ENCODE measurements at regions of chr9 and their contacts with region 1.

Region 1: GRCh38 chr9:129177791-129178559 is at the start of gene IER5L:
- DNase-seq: peak; percentile 90
- ATAC-seq: peak; percentile 77
- H3K4me3 ChIP-seq: peak within 1 kb of the TSS; percentile 83 to 94 (median 93)
- H3K27ac ChIP-seq: peak within 1 kb of the TSS; percentile 82
- H3K4me1 ChIP-seq: peaks cover 62% of the 10 kb centered on the region
- H3K27me3 ChIP-seq: peaks cover 6 to 36% of the 10 kb centered on the region in 2 experiments
- CTCF ChIP-seq: 0 out of 2 replicates have a peak, but pooled peaks have one; percentile 10
- EP300 ChIP-seq: 0 out of 4 replicates have a peak, but pooled peaks of 1 of the 2 experiments have one; percentile 3
- POLR2A ChIP-seq: peak in 1 of 2 experiments; percentile 98; a peak in 2 of 4 replicates
- RAD21 ChIP-seq: no peak
- total RNA-seq, gene IER5L: 2.5 and 3.3 TPM in 2 replicates

Region 2: GRCh38 chr9:128723866-128724743 is 453.9 kb before region 1 on chr9 and contains the start of gene ZDHHC12:
- CTCF ChIA-PET with region 1: no interaction called
- POLR2A ChIA-PET with region 1: no interaction called
- in situ Hi-C with region 1: no loop called
- intact Hi-C with region 1: no loop called
- DNase-seq: peak; percentile 97
- ATAC-seq: peak; percentile 95
- H3K4me3 ChIP-seq: peak within 1 kb of the TSS; percentile 70 to 88 (median 74)
- H3K27ac ChIP-seq: peak within 1 kb of the TSS; percentile 34
- H3K4me1 ChIP-seq: peaks cover 38% of the 10 kb centered on the region
- H3K27me3 ChIP-seq: no peaks in the 10 kb centered on the region
- CTCF ChIP-seq: no peak
- EP300 ChIP-seq: peak in 1 of 2 experiments; percentile 21; a peak in 1 of 4 replicates
- POLR2A ChIP-seq: peak; percentile 78 to 95
- RAD21 ChIP-seq: 0 out of 2 replicates have a peak, but pooled peaks have one; percentile 32
- total RNA-seq, gene ZDHHC12: 18.3 and 28.0 TPM in 2 replicates

Region 3: DNA sequence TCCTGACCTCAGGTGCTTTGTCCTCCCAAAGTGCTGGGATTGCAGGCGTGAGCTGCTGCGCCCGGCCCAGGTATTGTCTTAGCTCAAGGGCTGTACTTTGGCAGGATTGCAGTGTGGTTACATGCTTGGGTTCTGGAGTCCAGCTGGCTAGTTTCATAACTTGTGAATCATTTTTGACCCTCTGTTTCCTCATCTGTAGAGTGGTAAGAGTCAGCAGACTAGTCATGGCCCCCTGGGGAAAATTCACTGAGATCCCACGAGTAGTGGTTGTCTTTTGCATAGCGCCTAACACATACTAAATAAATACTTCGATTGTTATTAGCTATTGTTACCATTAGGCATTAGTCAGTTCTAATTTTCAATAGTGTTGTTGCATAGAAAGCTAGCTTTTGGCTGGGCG is 52.5 kb before region 1 on chr9:
- CTCF ChIA-PET with region 1: no interaction called
- POLR2A ChIA-PET with region 1: no interaction called
- in situ Hi-C with region 1: no loop called
- intact Hi-C with region 1: no loop called
- DNase-seq: no peak
- ATAC-seq: no peak; the same call in 2 of the 3 replicates
- H3K4me3 ChIP-seq: no peak overlapping the region
- H3K27ac ChIP-seq: no peak overlapping the region
- H3K4me1 ChIP-seq: peaks cover 19% of the 10 kb centered on the region
- H3K27me3 ChIP-seq: no peaks in the 10 kb centered on the region
- CTCF ChIP-seq: no peak
- EP300 ChIP-seq: no peak
- POLR2A ChIP-seq: no peak
- RAD21 ChIP-seq: no peak

Region 4: GRCh38 chr9:129139993-129140396 is 38.0 kb before region 1 on chr9:
- CTCF ChIA-PET with region 1: interaction called, 3 read pairs
- POLR2A ChIA-PET with region 1: interaction called, 55 read pairs
- in situ Hi-C with region 1: loop called (anchors 5 kb)
- intact Hi-C with region 1: loop called (anchors 5 kb)
- DNase-seq: peak; percentile 94
- ATAC-seq: peak; percentile 81
- H3K4me3 ChIP-seq: peak overlapping the region; percentile 57 to 75 (median 67)
- H3K27ac ChIP-seq: peak overlapping the region; percentile 98
- H3K4me1 ChIP-seq: peaks cover 51% of the 10 kb centered on the region
- H3K27me3 ChIP-seq: no peaks in the 10 kb centered on the region
- CTCF ChIP-seq: no peak
- EP300 ChIP-seq: peak in 1 of 2 experiments; percentile 63; a peak in 2 of 4 replicates
- POLR2A ChIP-seq: peak; percentile 75 to 78
- RAD21 ChIP-seq: no peak

Region 5: GRCh38 chr9:129333953-129334724 is 156.2 kb after region 1 on chr9:
- CTCF ChIA-PET with region 1: no interaction called
- POLR2A ChIA-PET with region 1: interaction called, 13 read pairs
- in situ Hi-C with region 1: no loop called
- intact Hi-C with region 1: no loop called
- DNase-seq: peak; percentile 94
- ATAC-seq: peak; percentile 93
- H3K4me3 ChIP-seq: peak overlapping the region in 2 of 3 experiments; percentile 30 to 65; a peak in 4 of 6 replicates
- H3K27ac ChIP-seq: peak overlapping the region; percentile 93
- H3K4me1 ChIP-seq: peaks cover 56% of the 10 kb centered on the region
- H3K27me3 ChIP-seq: no peaks in the 10 kb centered on the region
- CTCF ChIP-seq: peak; percentile 47; the same call in 1 of the 2 replicates
- EP300 ChIP-seq: peak in 1 of 2 experiments; percentile 84; a peak in 2 of 4 replicates
- POLR2A ChIP-seq: no peak
- RAD21 ChIP-seq: peak; percentile 75

Region 6: GRCh38 chr9:129460323-129461261 is 282.6 kb after region 1 on chr9:
- CTCF ChIA-PET with region 1: no interaction called
- POLR2A ChIA-PET with region 1: interaction called, 13 read pairs
- in situ Hi-C with region 1: no loop called
- intact Hi-C with region 1: no loop called
- DNase-seq: peak; percentile 94
- ATAC-seq: peak; percentile 82
- H3K4me3 ChIP-seq: peak overlapping the region; percentile 49 to 78 (median 57)
- H3K27ac ChIP-seq: peak overlapping the region; percentile 73
- H3K4me1 ChIP-seq: peaks cover 47% of the 10 kb centered on the region
- H3K27me3 ChIP-seq: peaks cover 4 to 10% of the 10 kb centered on the region in 2 experiments; a peak in 3 of 5 replicates
- CTCF ChIP-seq: peak; percentile 18; the same call in 1 of the 2 replicates
- EP300 ChIP-seq: peak in 1 of 2 experiments; percentile 78; a peak in 3 of 4 replicates
- POLR2A ChIP-seq: peak; percentile 58 to 60; a peak in 3 of 4 replicates
- RAD21 ChIP-seq: peak; percentile 78

Region 7: DNA sequence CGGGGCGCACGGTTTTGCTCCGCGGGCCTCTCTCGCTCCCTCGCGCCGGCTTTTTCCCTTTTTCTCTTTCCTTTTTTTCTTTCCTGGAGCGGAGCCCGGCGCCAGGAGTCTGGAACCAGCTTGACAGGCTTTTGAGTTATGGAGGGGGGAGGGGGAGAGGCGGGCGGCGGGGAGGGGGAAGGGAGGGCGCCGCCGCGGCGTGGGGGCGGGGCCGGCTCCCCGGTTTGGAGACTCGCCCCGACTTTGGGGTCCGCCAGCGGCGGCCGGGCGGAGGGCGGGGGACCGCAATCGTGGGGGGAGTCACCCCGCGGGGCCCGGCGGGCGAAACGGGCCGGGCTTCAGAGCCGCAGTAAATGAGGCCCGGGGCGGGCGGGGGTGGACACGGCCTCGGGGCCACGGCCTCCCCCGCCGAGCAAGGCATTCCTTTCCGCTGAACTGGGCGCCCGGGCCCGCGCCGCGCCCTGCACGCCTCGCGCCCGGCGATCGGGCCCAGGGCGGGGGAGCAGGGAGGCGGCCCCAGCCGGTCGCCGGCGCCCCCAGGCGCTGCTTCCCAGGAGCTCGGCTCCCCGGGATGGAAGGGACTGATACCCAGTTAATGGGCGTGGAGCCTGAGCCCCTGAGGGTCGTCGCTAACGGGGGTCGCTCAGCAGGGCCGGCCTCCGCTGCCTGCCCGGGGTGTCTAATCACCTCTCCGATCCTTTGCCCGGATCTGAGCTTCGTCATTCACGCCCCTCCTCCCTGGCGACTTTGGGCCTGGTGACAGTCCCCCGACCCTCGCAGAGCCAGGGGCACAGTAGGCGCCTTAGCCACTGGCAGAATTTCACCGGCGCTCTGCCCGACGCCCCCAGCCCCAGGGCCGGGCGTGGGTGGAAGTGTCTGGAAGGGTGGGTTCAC is 304.8 kb after region 1 on chr9:
- CTCF ChIA-PET with region 1: no interaction called
- POLR2A ChIA-PET with region 1: interaction called, 4 read pairs
- in situ Hi-C with region 1: loop called (anchors 10 kb)
- intact Hi-C with region 1: loop called (anchors 10 kb)
- DNase-seq: no peak
- ATAC-seq: no peak
- H3K4me3 ChIP-seq: no peak overlapping the region; a peak in 1 of 6 replicates
- H3K27ac ChIP-seq: no peak overlapping the region
- H3K4me1 ChIP-seq: peaks cover 82% of the 10 kb centered on the region
- H3K27me3 ChIP-seq: no peaks in the 10 kb centered on the region
- CTCF ChIP-seq: no peak
- EP300 ChIP-seq: no peak
- POLR2A ChIP-seq: no peak
- RAD21 ChIP-seq: no peak

Region 8: DNA sequence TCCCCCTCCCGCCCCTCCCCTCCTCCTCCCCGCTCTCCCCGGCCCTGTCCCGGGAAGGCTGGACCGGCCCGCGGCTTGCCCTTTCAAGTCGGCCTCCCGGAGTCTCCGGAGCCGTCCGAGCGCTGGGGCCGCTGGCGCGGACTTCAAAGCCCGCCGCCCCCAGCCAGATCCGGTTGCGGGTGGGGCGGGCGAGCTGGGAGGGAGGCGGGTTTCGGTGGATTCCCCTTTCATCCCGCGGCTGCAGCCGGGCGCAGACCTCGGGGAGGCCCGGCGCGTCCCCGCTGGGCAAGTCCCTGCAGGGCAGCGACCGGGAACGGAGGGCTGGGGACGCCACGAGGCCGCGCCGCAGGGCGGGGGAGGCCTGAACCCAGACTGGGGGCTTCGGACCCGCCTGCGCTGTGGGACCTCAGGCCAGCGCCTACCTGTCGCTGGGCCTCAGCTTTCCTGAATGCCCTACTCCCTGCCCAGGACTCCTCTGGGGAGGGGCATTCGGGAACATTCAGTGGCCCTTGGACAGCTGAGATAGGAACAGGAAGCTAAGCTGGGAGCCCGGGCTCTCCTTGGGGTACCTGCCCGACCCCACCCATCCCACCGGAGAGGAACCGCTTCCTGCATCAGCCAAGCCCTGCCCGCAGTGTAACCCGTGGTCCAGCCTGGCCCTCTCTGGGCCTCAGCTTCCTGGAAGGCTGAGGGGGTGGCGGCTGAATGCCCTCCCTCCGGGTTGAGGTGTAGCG is 419.5 kb after region 1 on chr9:
- CTCF ChIA-PET with region 1: no interaction called
- POLR2A ChIA-PET with region 1: interaction called, 12 read pairs
- in situ Hi-C with region 1: no loop called
- intact Hi-C with region 1: no loop called
- DNase-seq: peak; percentile 93
- ATAC-seq: peak; percentile 80
- H3K4me3 ChIP-seq: peak overlapping the region; percentile 15 to 76 (median 47); a peak in 5 of 6 replicates
- H3K27ac ChIP-seq: peak overlapping the region; percentile 99
- H3K4me1 ChIP-seq: peaks cover 85% of the 10 kb centered on the region
- H3K27me3 ChIP-seq: no peaks in the 10 kb centered on the region
- CTCF ChIP-seq: no peak
- EP300 ChIP-seq: peak; percentile 91 to 96; a peak in 3 of 4 replicates
- POLR2A ChIP-seq: peak; percentile 68 to 79
- RAD21 ChIP-seq: peak; percentile 67

Region 9: DNA sequence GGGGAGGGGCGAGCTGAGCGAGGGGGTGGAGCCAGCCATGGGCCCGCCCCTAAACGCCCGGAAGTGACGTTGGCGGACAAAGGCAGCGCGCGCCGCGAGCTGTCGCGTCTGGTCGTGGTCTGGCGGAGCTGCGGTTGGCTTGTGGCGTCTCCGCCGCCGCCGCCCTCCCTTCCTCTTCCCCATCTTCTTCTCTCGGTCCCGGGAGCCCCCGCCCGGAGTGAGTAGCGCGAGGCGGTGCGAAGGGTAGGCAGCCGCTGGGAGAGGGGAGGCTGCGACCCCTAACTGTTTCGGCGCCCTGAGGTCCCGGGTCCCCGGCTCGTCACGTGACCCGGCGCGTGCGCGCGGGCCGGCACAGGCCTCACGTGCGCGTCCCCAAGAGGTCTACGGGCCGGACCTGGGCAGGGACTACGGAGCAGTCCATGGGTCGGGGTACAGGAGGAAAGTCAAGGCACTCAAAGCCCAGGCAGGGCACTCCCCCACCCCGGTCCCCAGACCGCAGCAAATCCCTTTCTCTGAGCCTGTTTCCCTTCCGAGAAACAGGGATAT is 448.2 kb after region 1 on chr9 and contains the start of gene NTMT1:
- CTCF ChIA-PET with region 1: no interaction called
- POLR2A ChIA-PET with region 1: interaction called, 11 read pairs
- in situ Hi-C with region 1: no loop called
- intact Hi-C with region 1: loop called (anchors 10 kb)
- DNase-seq: peak; percentile 58
- ATAC-seq: peak; percentile 67
- H3K4me3 ChIP-seq: peak within 1 kb of the TSS; percentile 69 to 89 (median 85)
- H3K27ac ChIP-seq: peak within 1 kb of the TSS; percentile 95
- H3K4me1 ChIP-seq: peaks cover 72% of the 10 kb centered on the region
- H3K27me3 ChIP-seq: peaks cover 0 to 9% of the 10 kb centered on the region in 2 experiments; a peak in 2 of 5 replicates
- CTCF ChIP-seq: peak; percentile 14
- EP300 ChIP-seq: no peak
- POLR2A ChIP-seq: peak; percentile 82 to 95
- RAD21 ChIP-seq: peak; percentile 54; the same call in 1 of the 2 replicates
- total RNA-seq, gene NTMT1: 51.0 and 53.8 TPM in 2 replicates